ENCODE measurements at regions of chr2 and their contacts with region 1.

Region 1: GRCh38 chr2:157509744-157510143 is 65.9 kb upstream of the CYTIP start:
- DNase-seq: no peak
- ATAC-seq: no peak
- H3K4me3 ChIP-seq: no peak overlapping the region
- H3K27ac ChIP-seq: no peak overlapping the region
- H3K4me1 ChIP-seq: no peaks in the 10 kb centered on the region
- H3K27me3 ChIP-seq: no peaks in the 10 kb centered on the region; the same call in 1 of the 2 replicates
- CTCF ChIP-seq: 0 out of 2 replicates have a peak, but pooled peaks have one; percentile 5
- POLR2A ChIP-seq: no peak
- RAD21 ChIP-seq: peak; percentile 16; the same call in 1 of the 2 replicates

Region 2: DNA sequence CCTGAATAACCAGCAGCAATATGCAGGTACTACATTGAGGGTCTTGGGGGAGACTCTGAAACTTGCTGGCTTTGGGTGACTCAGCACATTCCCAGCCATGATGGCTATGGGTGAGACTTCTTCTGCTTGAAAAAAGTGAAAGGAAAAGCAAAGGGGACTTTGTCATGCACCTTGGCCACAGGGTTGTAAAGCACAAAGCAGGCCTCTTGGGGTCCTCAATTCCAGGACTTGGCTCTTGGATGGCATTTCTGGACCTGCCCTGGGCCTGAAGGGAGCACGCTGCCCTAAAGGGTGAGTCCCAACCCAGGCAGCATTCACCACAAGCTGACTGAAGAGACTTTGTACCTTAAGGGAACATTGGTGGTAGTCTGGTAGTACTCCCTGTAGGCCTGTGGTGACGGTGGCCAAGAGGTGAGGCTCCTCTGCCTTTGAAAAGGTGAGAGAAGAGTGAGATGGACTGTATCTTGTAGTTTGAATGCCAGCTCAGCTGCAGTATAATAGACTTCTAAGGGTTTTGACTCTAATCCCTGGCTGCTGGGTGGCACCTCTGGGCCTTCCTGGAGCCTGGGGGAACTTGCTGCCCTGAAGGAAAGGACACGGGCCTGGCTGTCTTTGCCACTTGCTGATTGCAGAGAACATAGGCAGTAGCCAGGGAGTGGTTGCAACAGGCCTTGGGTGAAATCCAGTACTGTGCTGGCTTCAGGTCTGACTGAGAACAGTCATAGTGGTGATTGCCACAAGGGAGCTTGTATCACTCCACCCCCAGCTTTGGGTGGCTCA is 29.4 kb before region 1 on chr2:
- CTCF ChIA-PET with region 1: no interaction called
- POLR2A ChIA-PET with region 1: interaction called, 17 read pairs
- dilution Hi-C with region 1: no loop called
- in situ Hi-C with region 1: no loop called
- intact Hi-C with region 1: no loop called
- DNase-seq: peak; percentile 24
- ATAC-seq: peak; percentile 29; the same call in 1 of the 2 replicates
- H3K4me3 ChIP-seq: no peak overlapping the region
- H3K27ac ChIP-seq: no peak overlapping the region
- H3K4me1 ChIP-seq: no peaks in the 10 kb centered on the region
- H3K27me3 ChIP-seq: no peaks in the 10 kb centered on the region
- CTCF ChIP-seq: no peak
- POLR2A ChIP-seq: no peak
- RAD21 ChIP-seq: no peak

Region 3: DNA sequence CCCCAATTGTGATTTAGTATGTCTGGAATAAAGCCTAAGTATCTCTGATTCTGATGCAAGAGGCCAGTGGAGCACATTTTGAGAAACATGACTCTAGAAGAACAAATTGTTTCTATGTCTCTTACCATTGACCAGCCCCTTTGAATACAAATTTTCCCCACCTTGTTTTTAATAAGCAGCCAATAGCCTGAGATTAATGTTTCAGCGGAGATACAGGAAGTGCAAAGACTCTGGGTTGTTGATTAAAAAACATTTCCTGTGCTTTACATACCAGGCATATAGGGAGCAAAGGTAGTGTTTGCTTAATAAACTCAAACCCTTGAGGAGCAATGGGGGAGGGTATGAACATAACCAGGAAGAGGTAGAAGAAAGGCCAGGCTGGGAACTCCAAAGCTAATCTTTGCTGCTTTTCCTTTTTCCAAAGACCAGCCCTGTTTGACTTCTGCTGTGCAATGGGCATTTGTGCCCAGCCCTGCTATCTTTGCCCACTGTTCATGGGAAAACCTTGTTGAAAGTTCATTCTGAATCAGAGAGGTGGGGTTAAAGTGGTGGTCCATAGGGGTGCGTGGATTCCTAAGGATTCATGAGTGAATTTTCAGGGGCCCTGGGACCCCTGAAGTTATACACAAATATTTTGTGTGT is 621.2 kb after region 1 on chr2:
- CTCF ChIA-PET with region 1: no interaction called
- POLR2A ChIA-PET with region 1: no interaction called
- dilution Hi-C with region 1: no loop called
- in situ Hi-C with region 1: no loop called
- intact Hi-C with region 1: no loop called
- DNase-seq: no peak
- ATAC-seq: no peak
- H3K4me3 ChIP-seq: no peak overlapping the region
- H3K27ac ChIP-seq: no peak overlapping the region
- H3K4me1 ChIP-seq: no peaks in the 10 kb centered on the region
- H3K27me3 ChIP-seq: peaks cover 4% of the 10 kb centered on the region; the same call in 1 of the 2 replicates
- CTCF ChIP-seq: no peak
- POLR2A ChIP-seq: no peak
- RAD21 ChIP-seq: no peak